ENCODE measurements at regions of chr15 and their contacts with region 1.

Region 1: GRCh38 chr15:38699633-38700230 is 135.1 kb upstream of the RASGRP1 start:
- DNase-seq: peak; percentile 71
- H3K4me3 ChIP-seq: no peak overlapping the region
- H3K27ac ChIP-seq: no peak overlapping the region
- H3K4me1 ChIP-seq: no peaks in the 10 kb centered on the region
- H3K27me3 ChIP-seq: no peaks in the 10 kb centered on the region
- CTCF ChIP-seq: peak; percentile 79 to 94
- POLR2A ChIP-seq: no peak

Region 2: GRCh38 chr15:38453971-38454695 is 245.6 kb before region 1 on chr15 and contains the start of gene FAM98B:
- CTCF ChIA-PET with region 1: interaction called, 17 read pairs
- POLR2A ChIA-PET with region 1: no interaction called
- dilution Hi-C with region 1: no loop called
- intact Hi-C with region 1: no loop called
- DNase-seq: peak; percentile 86
- H3K4me3 ChIP-seq: peak within 1 kb of the TSS; percentile 54 to 96 (median 83)
- H3K27ac ChIP-seq: peak within 1 kb of the TSS; percentile 75
- H3K4me1 ChIP-seq: peaks cover 9% of the 10 kb centered on the region
- H3K27me3 ChIP-seq: peaks cover 2 to 19% of the 10 kb centered on the region in 2 experiments
- CTCF ChIP-seq: no peak
- POLR2A ChIP-seq: peak; percentile 79
- total RNA-seq, gene FAM98B: 22.3 and 33.1 TPM in 2 replicates

Region 3: GRCh38 chr15:38474155-38474757 is 225.5 kb before region 1 on chr15:
- CTCF ChIA-PET with region 1: interaction called, 36 read pairs
- POLR2A ChIA-PET with region 1: no interaction called
- dilution Hi-C with region 1: no loop called
- intact Hi-C with region 1: no loop called
- DNase-seq: peak; percentile 72
- H3K4me3 ChIP-seq: no peak overlapping the region
- H3K27ac ChIP-seq: no peak overlapping the region
- H3K4me1 ChIP-seq: peaks cover 4% of the 10 kb centered on the region
- H3K27me3 ChIP-seq: no peaks in the 10 kb centered on the region
- CTCF ChIP-seq: peak; percentile 44 to 65
- POLR2A ChIP-seq: no peak

Region 4: GRCh38 chr15:38671675-38672254 is 28.0 kb before region 1 on chr15:
- CTCF ChIA-PET with region 1: interaction called, 11 read pairs
- POLR2A ChIA-PET with region 1: no interaction called
- dilution Hi-C with region 1: no loop called
- intact Hi-C with region 1: no loop called
- DNase-seq: no peak
- H3K4me3 ChIP-seq: no peak overlapping the region
- H3K27ac ChIP-seq: no peak overlapping the region
- H3K4me1 ChIP-seq: no peaks in the 10 kb centered on the region
- H3K27me3 ChIP-seq: peaks cover 22 to 33% of the 10 kb centered on the region in 2 experiments
- CTCF ChIP-seq: no peak
- POLR2A ChIP-seq: no peak

Region 5: DNA sequence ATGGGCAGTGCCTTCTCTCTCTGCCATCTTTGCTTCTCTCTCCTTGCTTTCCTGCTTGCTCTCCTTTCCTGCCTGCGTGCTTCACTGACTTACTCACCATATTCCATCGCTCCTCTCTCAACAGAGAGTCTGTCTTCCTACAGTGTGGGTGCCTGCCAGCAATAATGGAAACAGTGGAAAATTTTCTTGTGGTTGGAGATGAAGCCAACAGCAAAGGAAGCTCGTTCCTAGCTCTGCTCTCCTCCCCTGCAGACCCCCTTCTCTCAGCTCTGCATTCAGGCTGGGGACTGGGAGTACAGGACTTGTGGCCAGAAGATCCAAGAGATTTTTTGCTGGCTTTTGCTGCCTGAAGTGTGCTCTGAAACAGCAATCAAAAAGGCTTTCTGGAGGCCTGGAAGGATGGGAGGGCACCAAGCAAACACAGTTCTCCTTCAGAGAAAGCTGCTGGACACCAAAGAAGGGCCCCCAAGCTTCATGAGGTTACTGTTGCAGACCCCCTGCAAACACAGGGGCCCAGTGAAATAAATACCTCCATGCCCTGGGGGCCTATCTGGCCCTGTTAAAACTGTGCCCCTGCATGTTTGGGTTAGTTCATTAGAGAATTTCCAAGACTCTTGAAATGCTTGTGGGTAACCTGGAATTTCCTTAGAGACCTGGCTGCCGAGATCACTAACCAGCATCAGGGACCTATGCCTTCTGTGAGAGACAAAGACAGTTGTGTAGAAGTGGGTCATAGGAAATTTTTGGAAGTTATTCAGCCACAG is 14.8 kb after region 1 on chr15:
- CTCF ChIA-PET with region 1: interaction called, 21 read pairs
- POLR2A ChIA-PET with region 1: no interaction called
- dilution Hi-C with region 1: no loop called
- intact Hi-C with region 1: no loop called
- DNase-seq: peak; percentile 92
- H3K4me3 ChIP-seq: no peak overlapping the region
- H3K27ac ChIP-seq: no peak overlapping the region
- H3K4me1 ChIP-seq: peaks cover 9% of the 10 kb centered on the region
- H3K27me3 ChIP-seq: no peaks in the 10 kb centered on the region
- CTCF ChIP-seq: no peak
- POLR2A ChIP-seq: no peak

Region 6: GRCh38 chr15:38724827-38725226 is 25.1 kb after region 1 on chr15:
- CTCF ChIA-PET with region 1: interaction called, 13 read pairs
- POLR2A ChIA-PET with region 1: no interaction called
- dilution Hi-C with region 1: no loop called
- intact Hi-C with region 1: no loop called
- DNase-seq: no peak
- H3K4me3 ChIP-seq: no peak overlapping the region
- H3K27ac ChIP-seq: no peak overlapping the region
- H3K4me1 ChIP-seq: no peaks in the 10 kb centered on the region
- H3K27me3 ChIP-seq: peaks cover 4 to 7% of the 10 kb centered on the region in 2 experiments
- CTCF ChIP-seq: no peak
- POLR2A ChIP-seq: no peak

Region 7: GRCh38 chr15:39472621-39473297 is 773.0 kb after region 1 on chr15:
- CTCF ChIA-PET with region 1: no interaction called
- POLR2A ChIA-PET with region 1: no interaction called
- dilution Hi-C with region 1: no loop called
- intact Hi-C with region 1: loop called (anchors 10 kb)
- DNase-seq: no peak
- H3K4me3 ChIP-seq: no peak overlapping the region
- H3K27ac ChIP-seq: no peak overlapping the region
- H3K4me1 ChIP-seq: peaks cover 26% of the 10 kb centered on the region
- H3K27me3 ChIP-seq: no peaks in the 10 kb centered on the region
- CTCF ChIP-seq: no peak
- POLR2A ChIP-seq: no peak

Measured in endothelial cell of umbilical vein (primary cell).